Gastrocnemius medialis (tissue), 4 donors: ENCODE measurements at regions of chr3 and their contacts with region 1.

Region 1: DNA sequence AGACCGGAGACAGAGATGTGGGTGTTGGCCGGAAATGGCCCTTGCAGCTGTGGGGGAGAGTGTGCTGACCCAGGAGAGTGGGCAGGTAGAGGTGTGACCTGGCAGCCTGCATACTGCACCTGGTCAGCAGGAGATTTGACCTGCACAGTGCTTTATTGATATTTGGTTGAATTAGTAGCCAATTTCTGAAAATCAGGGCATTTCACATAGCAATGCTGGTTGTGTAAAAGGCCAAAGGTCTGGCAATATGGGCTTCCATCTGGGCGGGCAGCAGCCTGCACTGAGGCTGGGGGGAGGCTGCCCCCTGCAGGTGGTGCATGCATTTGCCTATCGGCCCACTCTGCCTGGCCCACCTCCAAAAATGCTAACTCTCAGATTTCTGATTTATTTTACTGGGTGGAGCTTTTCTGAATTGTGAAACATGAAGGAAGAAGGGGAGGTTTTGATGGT is 9.4 kb upstream of the MGLL start:
- DNase-seq: peak in 1 of 2 donors; percentile 46
- ATAC-seq: peak; percentile 45 to 79
- H3K4me3 ChIP-seq: no peak overlapping the region
- H3K27ac ChIP-seq: no peak overlapping the region
- H3K4me1 ChIP-seq: no peaks in the 10 kb centered on the region
- H3K27me3 ChIP-seq: no peaks in the 10 kb centered on the region
- CTCF ChIP-seq: peak; percentile 75 to 90 (median 81)
- POLR2A ChIP-seq: no peak

Region 2: GRCh38 chr3:127574880-127575878 is 256.6 kb before region 1 on chr3:
- in situ Hi-C with region 1: loop called in 1 of 4 experiments (anchors 10 kb)
- intact Hi-C with region 1: no loop called
- DNase-seq: peak; percentile 61 to 85
- ATAC-seq: peak; percentile 92 to 97
- H3K4me3 ChIP-seq: no peak overlapping the region
- H3K27ac ChIP-seq: no peak overlapping the region
- H3K4me1 ChIP-seq: peaks cover 0 to 6% of the 10 kb centered on the region in 2 donors
- H3K27me3 ChIP-seq: no peaks in the 10 kb centered on the region
- CTCF ChIP-seq: peak; percentile 94 to 98 (median 96)
- POLR2A ChIP-seq: no peak

Region 3: DNA sequence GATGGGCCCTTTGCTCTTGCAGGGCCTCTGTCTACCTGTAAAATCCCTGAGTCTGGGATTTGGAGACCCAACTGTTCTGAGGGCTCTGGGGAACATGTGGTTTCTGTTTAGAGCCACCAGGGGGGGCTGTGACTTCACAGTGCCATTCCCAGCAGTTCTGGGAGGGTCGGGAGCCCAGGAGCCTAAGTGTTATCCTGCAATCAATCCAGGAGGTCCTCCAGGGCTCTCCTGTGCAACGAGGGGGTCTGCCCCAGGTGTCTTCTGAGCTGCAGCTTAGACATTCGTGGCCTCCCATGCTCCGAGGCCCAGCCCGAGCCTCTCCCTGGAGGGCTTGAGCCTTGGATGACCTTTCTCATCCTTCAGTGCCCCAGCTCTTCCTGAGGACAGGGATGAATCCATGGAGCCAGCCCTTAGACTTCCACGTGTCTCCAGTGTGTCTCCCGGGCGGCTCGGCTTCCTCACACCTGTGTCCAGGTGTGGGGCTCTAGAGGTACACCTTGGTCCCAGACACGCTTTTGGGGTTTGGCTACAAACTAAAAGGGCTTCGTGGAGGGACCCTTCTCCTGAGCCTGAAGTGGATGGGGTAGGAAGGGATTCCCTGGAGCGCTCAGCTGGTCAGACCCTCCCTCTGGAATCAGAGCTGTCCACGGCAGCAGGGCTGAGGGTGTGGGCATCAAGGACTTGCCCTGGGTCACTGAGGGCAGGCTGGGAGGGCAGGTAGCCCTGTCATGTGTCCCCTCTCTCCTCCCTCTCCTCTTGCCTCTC is 179.3 kb before region 1 on chr3:
- in situ Hi-C with region 1: loop called (anchors 10 to 25 kb)
- intact Hi-C with region 1: loop called (anchors 1 kb)
- DNase-seq: no peak
- ATAC-seq: peak; percentile 78 to 89
- H3K4me3 ChIP-seq: no peak overlapping the region
- H3K27ac ChIP-seq: no peak overlapping the region
- H3K4me1 ChIP-seq: peaks cover 0 to 5% of the 10 kb centered on the region in 2 donors
- H3K27me3 ChIP-seq: no peaks in the 10 kb centered on the region
- CTCF ChIP-seq: peak; percentile 87 to 97 (median 90)
- POLR2A ChIP-seq: no peak

Region 4: GRCh38 chr3:127672516-127673190 is 159.1 kb before region 1 on chr3 and contains the start of gene ABTB1:
- in situ Hi-C with region 1: loop called in 1 of 4 experiments (anchors 25 kb)
- intact Hi-C with region 1: no loop called
- DNase-seq: peak; percentile 75 to 81
- ATAC-seq: peak; percentile 84 to 87
- H3K4me3 ChIP-seq: peak within 1 kb of the TSS; percentile 63 to 91 (median 80)
- H3K27ac ChIP-seq: peak within 1 kb of the TSS; percentile 85 to 98 (median 90)
- H3K4me1 ChIP-seq: peaks cover 11 to 19% of the 10 kb centered on the region in 2 donors
- H3K27me3 ChIP-seq: no peaks in the 10 kb centered on the region
- CTCF ChIP-seq: no peak
- POLR2A ChIP-seq: peak; percentile 91 to 93
- total RNA-seq, gene ABTB1: 22.9 to 37.5 (median 30.1) TPM

Region 5: GRCh38 chr3:127953091-127954035 is 121.6 kb after region 1 on chr3:
- in situ Hi-C with region 1: no loop called
- intact Hi-C with region 1: no loop called
- DNase-seq: no peak
- ATAC-seq: peak; percentile 76 to 88
- H3K4me3 ChIP-seq: no peak overlapping the region
- H3K27ac ChIP-seq: peak overlapping the region; percentile 85 to 95 (median 90)
- H3K4me1 ChIP-seq: peaks cover 54 to 64% of the 10 kb centered on the region in 2 donors
- H3K27me3 ChIP-seq: no peaks in the 10 kb centered on the region
- CTCF ChIP-seq: no peak
- POLR2A ChIP-seq: no peak